ENCODE measurements at regions of chr14 and their contacts with region 1.

Region 1: DNA sequence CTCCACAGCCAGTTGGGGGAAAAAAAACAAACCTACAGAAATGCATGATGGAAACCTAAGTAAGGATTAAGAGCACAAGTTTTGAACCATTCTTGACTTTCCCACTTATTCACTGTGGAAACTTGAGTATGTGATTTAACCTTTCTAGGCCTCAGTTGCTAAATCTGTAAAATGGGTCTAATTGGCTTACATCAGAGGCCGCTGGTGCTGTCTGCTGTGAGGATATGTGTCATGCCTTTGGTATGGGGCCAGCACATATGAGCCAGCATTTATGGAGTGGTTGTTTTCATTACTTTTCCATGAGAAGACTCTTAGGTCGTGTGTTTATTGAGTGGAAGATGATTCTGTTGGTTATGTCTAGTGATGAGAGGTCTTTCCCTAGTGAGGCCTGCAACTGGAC is 102.4 kb downstream of the ESR2 start:
- DNase-seq: no peak
- H3K4me3 ChIP-seq: no peak overlapping the region
- H3K4me3 Mint-ChIP-seq: no peak overlapping the region
- H3K27ac Mint-ChIP-seq: peak overlapping the region; percentile 11
- H3K4me1 ChIP-seq: peaks cover 24% of the 10 kb centered on the region; the same call in 1 of the 2 replicates
- H3K4me1 Mint-ChIP-seq: peaks cover 25% of the 10 kb centered on the region
- H3K27me3 ChIP-seq: no peaks in the 10 kb centered on the region
- H3K27me3 Mint-ChIP-seq: no peaks in the 10 kb centered on the region
- CTCF ChIP-seq: no peak

Region 2: GRCh38 chr14:64174922-64175782 is 16.6 kb before region 1 on chr14:
- CTCF ChIA-PET with region 1: no interaction called
- POLR2A ChIA-PET with region 1: no interaction called
- intact Hi-C with region 1: loop called (anchors 1 kb)
- DNase-seq: no peak
- H3K4me3 ChIP-seq: no peak overlapping the region
- H3K4me3 Mint-ChIP-seq: no peak overlapping the region
- H3K27ac Mint-ChIP-seq: no peak overlapping the region
- H3K4me1 ChIP-seq: no peaks in the 10 kb centered on the region
- H3K4me1 Mint-ChIP-seq: peaks cover 7% of the 10 kb centered on the region
- H3K27me3 ChIP-seq: no peaks in the 10 kb centered on the region
- H3K27me3 Mint-ChIP-seq: no peaks in the 10 kb centered on the region
- CTCF ChIP-seq: no peak

Measured in Caco-2 (cell line).